PC-9 (cell line): ENCODE measurements at regions of chr1 and their contacts with region 1.

Region 1: GRCh38 chr1:209354111-209354839 is 229.2 kb upstream of the CAMK1G start:
- DNase-seq: peak; percentile 78 to 79
- H3K4me3 ChIP-seq: no peak overlapping the region
- H3K27ac ChIP-seq: no peak overlapping the region
- H3K4me1 ChIP-seq: peaks cover 31% of the 10 kb centered on the region
- H3K27me3 ChIP-seq: no peaks in the 10 kb centered on the region
- CTCF ChIP-seq: peak; percentile 92

Region 2: DNA sequence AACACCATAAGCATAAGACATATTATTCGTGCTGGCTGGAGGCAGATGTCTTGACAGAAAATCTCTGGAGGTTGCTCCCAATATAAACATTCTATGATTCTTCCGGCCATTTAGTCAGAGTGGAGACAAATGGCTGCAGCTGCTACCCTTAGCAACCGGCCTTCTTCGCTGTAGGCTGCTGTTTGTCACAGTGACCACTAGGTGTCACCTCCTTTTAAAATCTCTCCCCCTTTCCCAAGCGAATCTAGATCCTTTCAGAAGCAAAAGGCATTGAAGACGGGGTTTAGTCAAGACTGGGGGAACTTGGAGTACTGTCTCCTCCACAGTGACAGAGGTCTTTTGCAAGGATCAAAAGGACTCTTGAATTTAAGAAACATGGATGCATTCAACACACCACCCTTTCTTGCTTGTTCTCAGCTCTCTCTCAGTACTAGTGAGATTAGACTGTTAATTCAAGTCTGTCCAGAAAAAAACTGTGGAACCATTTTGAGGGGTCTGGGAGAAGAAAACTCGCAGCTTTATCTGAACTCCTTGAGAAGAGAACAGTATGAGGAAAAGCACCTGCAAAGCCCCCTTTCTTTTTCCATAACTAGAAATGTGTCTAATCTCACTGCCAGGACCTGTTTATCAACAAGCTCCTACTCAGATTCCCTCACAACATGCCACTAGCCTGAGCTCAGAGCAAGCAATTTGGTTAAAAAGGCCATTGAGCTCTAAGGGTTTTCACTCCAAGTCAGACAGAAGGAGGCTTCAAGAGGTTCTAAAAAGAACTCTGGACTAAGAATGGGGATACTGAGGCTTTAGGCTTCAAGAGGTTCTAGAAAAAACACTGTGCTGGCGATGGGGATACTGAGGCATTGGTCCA is 701.7 kb before region 1 on chr1:
- CTCF ChIA-PET with region 1: no interaction called
- POLR2A ChIA-PET with region 1: no interaction called
- intact Hi-C with region 1: loop called (anchors 5 kb)
- DNase-seq: peak in 1 of 2 experiments; percentile 37
- H3K4me3 ChIP-seq: no peak overlapping the region
- H3K27ac ChIP-seq: no peak overlapping the region
- H3K4me1 ChIP-seq: no peaks in the 10 kb centered on the region
- H3K27me3 ChIP-seq: peaks cover 8% of the 10 kb centered on the region; the same call in 1 of the 2 replicates
- CTCF ChIP-seq: peak; percentile 88

Region 3: DNA sequence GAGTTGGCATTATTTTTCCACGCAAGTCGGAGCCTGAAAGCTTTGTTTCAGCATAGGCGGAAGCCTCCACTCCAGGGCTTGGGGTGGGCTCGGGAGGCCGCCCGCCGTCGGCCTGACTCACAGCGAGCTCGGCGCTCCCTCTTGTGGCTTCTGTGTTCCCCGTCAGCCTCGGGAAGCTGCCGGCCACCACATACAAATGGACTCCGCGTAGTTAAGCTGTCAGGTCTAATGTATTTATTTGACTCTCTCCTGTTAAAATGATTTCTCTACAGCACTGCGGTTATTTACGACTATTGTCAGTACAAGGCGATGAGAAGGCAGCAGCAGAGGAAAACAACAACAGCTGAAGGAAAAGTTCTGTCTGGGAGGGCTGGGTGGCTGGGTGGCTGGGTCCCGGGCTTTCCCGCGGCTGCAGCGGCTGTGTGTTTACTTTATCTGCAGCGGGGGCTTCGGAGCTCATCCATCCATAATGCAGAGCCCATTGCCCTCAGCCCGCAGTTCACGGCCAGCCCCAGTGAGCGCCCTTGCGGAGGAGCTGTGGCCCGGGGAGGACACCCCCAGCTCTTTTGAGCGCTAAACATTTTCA is 146.5 kb before region 1 on chr1:
- CTCF ChIA-PET with region 1: no interaction called
- POLR2A ChIA-PET with region 1: no interaction called
- intact Hi-C with region 1: loop called (anchors 1 kb)
- DNase-seq: peak in 1 of 2 experiments; percentile 47
- H3K4me3 ChIP-seq: no peak overlapping the region
- H3K27ac ChIP-seq: no peak overlapping the region
- H3K4me1 ChIP-seq: no peaks in the 10 kb centered on the region
- H3K27me3 ChIP-seq: no peaks in the 10 kb centered on the region; the same call in 1 of the 2 replicates
- CTCF ChIP-seq: 0 out of 2 replicates have a peak, but pooled peaks have one; percentile 20

Region 4: GRCh38 chr1:209398313-209398991 is 44.2 kb after region 1 on chr1:
- CTCF ChIA-PET with region 1: no interaction called
- POLR2A ChIA-PET with region 1: interaction called, 3 read pairs
- intact Hi-C with region 1: loop called (anchors 1 kb)
- DNase-seq: peak; percentile 88 to 98
- H3K4me3 ChIP-seq: no peak overlapping the region; the same call in 1 of the 2 replicates
- H3K27ac ChIP-seq: peak overlapping the region; percentile 99
- H3K4me1 ChIP-seq: peaks cover 64% of the 10 kb centered on the region
- H3K27me3 ChIP-seq: no peaks in the 10 kb centered on the region
- CTCF ChIP-seq: no peak

Region 5: DNA sequence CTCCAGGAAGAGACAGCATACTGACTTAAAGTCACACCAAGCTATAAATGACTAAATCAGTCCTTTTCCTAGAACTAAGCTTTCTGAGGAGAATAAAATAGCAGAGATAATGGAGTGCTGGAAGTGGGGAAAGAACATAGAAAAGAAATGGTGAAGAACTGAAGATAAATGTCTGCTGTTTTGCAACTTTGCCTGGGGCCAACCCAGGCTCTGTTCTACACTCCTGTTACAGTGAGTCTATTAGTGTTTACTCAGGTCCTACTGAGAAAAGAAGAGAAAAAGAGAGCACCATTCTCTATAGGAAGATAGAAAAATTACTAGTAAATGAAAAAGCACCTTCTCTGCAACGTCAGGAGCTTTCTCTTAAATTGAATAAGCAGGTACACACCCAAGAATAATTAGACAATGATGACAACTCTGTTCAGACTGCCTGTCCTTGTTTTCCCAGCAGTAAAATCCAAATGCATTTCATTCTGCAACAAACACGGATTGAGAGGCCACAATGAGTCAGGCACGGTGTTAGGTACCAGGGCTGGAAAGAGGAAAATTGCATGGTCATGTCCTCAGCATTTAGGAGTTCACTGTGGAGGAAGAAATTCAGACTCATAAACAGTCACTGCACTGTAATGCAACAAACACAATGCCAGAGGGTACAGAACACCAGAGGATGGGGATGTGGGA is 89.8 kb after region 1 on chr1:
- CTCF ChIA-PET with region 1: no interaction called
- POLR2A ChIA-PET with region 1: no interaction called
- intact Hi-C with region 1: no loop called
- DNase-seq: no peak
- H3K4me3 ChIP-seq: no peak overlapping the region
- H3K27ac ChIP-seq: no peak overlapping the region
- H3K4me1 ChIP-seq: no peaks in the 10 kb centered on the region
- H3K27me3 ChIP-seq: no peaks in the 10 kb centered on the region
- CTCF ChIP-seq: no peak